CD4-positive, alpha-beta T cell (primary cell): ENCODE measurements at regions of chrX and their contacts with region 1.

Region 1: DNA sequence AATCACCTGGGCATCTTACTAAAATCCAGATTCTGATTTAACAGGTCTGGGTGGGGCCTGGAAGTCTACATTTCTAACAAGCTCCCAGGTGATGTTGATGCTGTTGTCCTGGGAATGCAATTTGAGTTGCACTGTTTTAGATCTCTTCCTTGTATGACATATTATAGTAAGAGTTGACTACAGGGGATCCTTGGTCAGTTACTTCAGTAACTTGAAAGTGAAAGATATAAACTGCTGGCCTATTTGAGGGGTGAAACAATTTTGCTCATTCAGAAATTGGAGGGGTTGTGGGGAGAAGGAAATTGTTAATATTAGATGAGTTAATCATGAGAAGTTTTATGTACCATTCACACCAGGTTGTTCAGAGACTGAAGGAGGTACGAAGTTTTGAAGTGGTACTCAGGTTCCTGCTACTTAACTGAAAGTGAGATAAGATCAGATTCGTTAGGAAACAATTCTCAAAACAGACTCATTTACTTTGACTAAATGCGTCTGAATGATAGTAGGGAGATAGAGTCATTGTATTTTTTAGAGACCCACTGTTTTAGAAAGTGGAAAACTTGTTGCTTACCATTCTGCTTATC is 12.5 kb downstream of the SH2D1A start:
- DNase-seq: peak in 3 of 14 experiments; percentile 47 to 54 (median 51)
- ATAC-seq: peak; percentile 80
- H3K4me3 ChIP-seq: no peak overlapping the region
- H3K4me3 Mint-ChIP-seq: peak overlapping the region; percentile 74
- H3K27ac ChIP-seq: peak overlapping the region in 1 of 2 donors; percentile 52
- H3K27ac Mint-ChIP-seq: peak overlapping the region; percentile 81
- H3K4me1 ChIP-seq: peaks cover 34% of the 10 kb centered on the region
- H3K4me1 Mint-ChIP-seq: peaks cover 65% of the 10 kb centered on the region
- H3K27me3 ChIP-seq: no peaks in the 10 kb centered on the region
- H3K27me3 Mint-ChIP-seq: no peaks in the 10 kb centered on the region
- CTCF ChIP-seq: no peak

Region 2: DNA sequence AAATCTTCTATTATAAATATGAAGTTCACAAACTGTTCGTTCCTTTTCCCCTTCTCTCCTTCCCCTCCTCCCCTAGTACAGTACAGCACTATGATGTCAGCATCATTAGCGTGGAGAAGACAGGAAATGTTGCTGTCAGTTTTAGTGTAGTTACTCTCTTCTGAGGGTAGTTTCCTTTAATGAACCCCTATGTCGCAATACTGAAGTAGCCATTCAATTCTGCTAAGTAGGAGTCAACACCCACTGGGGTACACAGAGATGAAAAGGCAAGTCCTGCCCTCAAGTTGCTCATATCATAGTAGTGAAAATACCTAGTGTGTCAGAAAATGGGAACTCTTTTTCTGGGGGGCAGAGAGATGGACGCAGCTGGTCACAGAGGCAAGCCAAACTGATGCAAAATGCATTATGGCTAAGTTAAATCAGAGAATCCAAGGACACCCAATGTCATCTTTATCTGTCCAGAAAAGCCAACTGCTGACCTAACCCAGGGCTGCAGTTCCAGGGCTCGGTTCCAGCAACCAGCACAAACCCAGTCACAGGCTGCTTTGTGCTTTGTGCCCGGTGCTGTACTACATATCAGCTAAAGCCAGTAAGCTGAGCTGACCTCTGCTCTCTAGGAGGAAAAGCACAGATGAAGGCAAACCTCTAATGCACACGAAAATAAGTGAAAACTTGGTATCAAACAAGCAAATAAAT is 1143.3 kb before region 1 on chrX:
- CTCF ChIA-PET with region 1: no interaction called
- POLR2A ChIA-PET with region 1: no interaction called
- intact Hi-C with region 1: no loop called
- DNase-seq: no peak
- ATAC-seq: no peak
- H3K4me3 ChIP-seq: no peak overlapping the region
- H3K4me3 Mint-ChIP-seq: no peak overlapping the region
- H3K27ac ChIP-seq: no peak overlapping the region
- H3K27ac Mint-ChIP-seq: no peak overlapping the region
- H3K4me1 ChIP-seq: no peaks in the 10 kb centered on the region
- H3K4me1 Mint-ChIP-seq: no peaks in the 10 kb centered on the region
- H3K27me3 ChIP-seq: no peaks in the 10 kb centered on the region
- H3K27me3 Mint-ChIP-seq: no peaks in the 10 kb centered on the region
- CTCF ChIP-seq: no peak

Region 3: GRCh38 chrX:124211312-124211942 is 147.5 kb before region 1 on chrX:
- CTCF ChIA-PET with region 1: interaction called, 3 read pairs
- POLR2A ChIA-PET with region 1: interaction called, 3 read pairs
- intact Hi-C with region 1: loop called in 1 of 2 experiments (anchors 5 kb)
- DNase-seq: peak in 4 of 14 experiments; percentile 34 to 70 (median 66)
- ATAC-seq: peak; percentile 65
- H3K4me3 ChIP-seq: no peak overlapping the region
- H3K4me3 Mint-ChIP-seq: peak overlapping the region; percentile 35
- H3K27ac ChIP-seq: no peak overlapping the region
- H3K27ac Mint-ChIP-seq: peak overlapping the region; percentile 71
- H3K4me1 ChIP-seq: peaks cover 26% of the 10 kb centered on the region
- H3K4me1 Mint-ChIP-seq: peaks cover 43% of the 10 kb centered on the region
- H3K27me3 ChIP-seq: no peaks in the 10 kb centered on the region
- H3K27me3 Mint-ChIP-seq: no peaks in the 10 kb centered on the region
- CTCF ChIP-seq: peak; percentile 69

Region 4: GRCh38 chrX:124239911-124240310 is 119.0 kb before region 1 on chrX:
- CTCF ChIA-PET with region 1: no interaction called
- POLR2A ChIA-PET with region 1: interaction called, 3 read pairs
- intact Hi-C with region 1: loop called in 1 of 2 experiments (anchors 5 kb)
- DNase-seq: peak in 3 of 14 experiments; percentile 64 to 72 (median 65)
- ATAC-seq: peak; percentile 68
- H3K4me3 ChIP-seq: peak overlapping the region; percentile 35
- H3K4me3 Mint-ChIP-seq: peak overlapping the region; percentile 59
- H3K27ac ChIP-seq: peak overlapping the region in 1 of 2 donors; percentile 22
- H3K27ac Mint-ChIP-seq: peak overlapping the region; percentile 62
- H3K4me1 ChIP-seq: peaks cover 4% of the 10 kb centered on the region
- H3K4me1 Mint-ChIP-seq: peaks cover 32% of the 10 kb centered on the region
- H3K27me3 ChIP-seq: no peaks in the 10 kb centered on the region
- H3K27me3 Mint-ChIP-seq: no peaks in the 10 kb centered on the region
- CTCF ChIP-seq: no peak

Region 5: GRCh38 chrX:124346117-124346876 is 12.6 kb before region 1 on chrX and contains the start of gene SH2D1A:
- CTCF ChIA-PET with region 1: interaction called, 5 read pairs
- POLR2A ChIA-PET with region 1: interaction called, 10 read pairs
- intact Hi-C with region 1: loop called in 1 of 2 experiments (anchors 2 kb)
- DNase-seq: peak in 10 of 14 experiments; percentile 3 to 79 (median 33)
- ATAC-seq: peak; percentile 47
- H3K4me3 ChIP-seq: peak within 1 kb of the TSS; percentile 78
- H3K4me3 Mint-ChIP-seq: peak within 1 kb of the TSS; percentile 99
- H3K27ac ChIP-seq: peak within 1 kb of the TSS; percentile 69 to 75
- H3K27ac Mint-ChIP-seq: peak within 1 kb of the TSS; percentile 98
- H3K4me1 ChIP-seq: peaks cover 27% of the 10 kb centered on the region
- H3K4me1 Mint-ChIP-seq: peaks cover 52% of the 10 kb centered on the region
- H3K27me3 ChIP-seq: no peaks in the 10 kb centered on the region
- H3K27me3 Mint-ChIP-seq: no peaks in the 10 kb centered on the region
- CTCF ChIP-seq: no peak
- total RNA-seq, gene SH2D1A: 39.6 to 41.5 TPM